Activated naive CD4-positive, alpha-beta T cell treated with anti-CD3 and anti-CD28 coated beads for 36 hours (primary cell): ENCODE measurements at regions of chr11 and their contacts with region 1.

Region 1: DNA sequence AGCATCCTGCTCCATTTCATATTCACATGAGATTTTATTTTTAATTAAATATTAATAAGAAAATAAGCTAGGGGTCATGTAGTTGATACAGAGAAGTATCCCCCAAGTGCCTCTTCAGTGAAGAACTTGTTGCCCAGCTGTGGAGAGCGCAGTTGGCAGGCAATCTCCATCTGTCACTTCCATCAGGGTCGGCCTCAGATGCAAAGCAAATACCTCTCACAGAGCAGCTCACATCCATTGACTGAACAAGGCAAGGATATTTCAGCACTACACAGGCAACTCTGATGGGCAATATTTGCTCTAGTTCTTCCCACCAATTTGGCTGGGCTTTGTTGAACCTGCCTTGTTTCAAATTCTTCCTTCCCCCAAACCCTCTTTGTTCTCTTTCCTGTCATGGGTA is 129.4 kb downstream of the NOX4 start:
- DNase-seq: no peak
- H3K4me3 Mint-ChIP-seq: no peak overlapping the region
- H3K27ac Mint-ChIP-seq: no peak overlapping the region
- H3K4me1 Mint-ChIP-seq: no peaks in the 10 kb centered on the region
- H3K27me3 Mint-ChIP-seq: no peaks in the 10 kb centered on the region

Region 2: GRCh38 chr11:88909500-88909899 is 452.2 kb before region 1 on chr11:
- CTCF ChIA-PET with region 1: no interaction called
- intact Hi-C with region 1: loop called (anchors 5 kb)
- DNase-seq: no peak
- H3K4me3 Mint-ChIP-seq: no peak overlapping the region
- H3K27ac Mint-ChIP-seq: no peak overlapping the region
- H3K4me1 Mint-ChIP-seq: no peaks in the 10 kb centered on the region
- H3K27me3 Mint-ChIP-seq: no peaks in the 10 kb centered on the region